ENCODE measurements at regions of chr4 and their contacts with region 1.

Region 1: DNA sequence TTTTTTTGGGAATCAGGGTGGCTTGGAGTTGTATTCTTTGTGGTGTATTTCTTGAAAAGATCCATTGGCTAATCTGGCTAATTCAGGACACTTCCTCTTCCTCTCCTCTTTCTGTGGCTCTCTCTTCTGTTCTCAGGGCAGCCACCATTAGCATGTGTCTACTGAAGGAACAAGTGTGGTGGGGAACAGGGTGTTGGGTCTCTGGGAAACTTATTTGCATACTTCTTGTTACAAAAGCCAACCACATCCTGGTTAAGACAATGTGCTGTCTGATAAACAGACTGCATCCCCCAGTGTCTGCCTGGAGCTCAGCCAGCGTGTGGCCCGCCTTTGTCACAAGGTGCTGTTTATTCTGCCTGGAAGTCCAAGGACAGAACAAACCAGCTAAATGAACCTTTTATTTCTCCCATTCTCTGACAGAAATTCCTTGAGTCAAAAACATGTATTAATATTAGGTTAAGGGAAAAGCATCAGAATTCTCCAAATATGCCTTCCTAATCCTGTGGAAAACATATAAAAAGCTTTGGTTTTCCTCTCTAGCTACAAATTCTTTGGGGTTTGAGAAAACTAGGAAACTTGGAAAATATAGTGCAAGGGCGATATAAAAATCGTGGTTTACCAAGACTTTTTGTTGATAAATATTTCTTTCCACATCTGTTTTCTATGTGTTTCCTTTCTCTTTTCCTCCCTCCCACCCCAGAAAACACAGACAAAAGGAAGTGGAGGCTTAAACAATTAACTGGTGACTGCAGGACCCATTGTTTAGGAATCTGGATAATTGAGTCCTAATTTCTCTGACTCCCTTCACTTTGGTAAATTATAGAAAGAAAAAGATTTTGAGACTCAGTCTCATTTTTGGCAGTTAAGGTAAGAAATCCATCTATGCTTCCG is 203.6 kb downstream of the SPRY1 start:
- DNase-seq: peak; percentile 27 to 65 (median 60)
- H3K4me3 ChIP-seq: no peak overlapping the region
- H3K4me3 Mint-ChIP-seq: peak overlapping the region; percentile 1 to 84 (median 30)
- H3K27ac ChIP-seq: no peak overlapping the region
- H3K27ac Mint-ChIP-seq: peak overlapping the region; percentile 67 to 94 (median 77)
- H3K4me1 ChIP-seq: peaks cover 21% of the 10 kb centered on the region
- H3K4me1 Mint-ChIP-seq: peaks cover 10 to 19% (median 16%) of the 10 kb centered on the region in 4 donors
- H3K27me3 ChIP-seq: no peaks in the 10 kb centered on the region
- H3K27me3 Mint-ChIP-seq: no peaks in the 10 kb centered on the region

Region 2: GRCh38 chr4:123517971-123518370 is 82.2 kb before region 1 on chr4:
- CTCF ChIA-PET with region 1: no interaction called
- POLR2A ChIA-PET with region 1: no interaction called
- intact Hi-C with region 1: no loop called
- DNase-seq: no peak
- H3K4me3 ChIP-seq: no peak overlapping the region
- H3K4me3 Mint-ChIP-seq: no peak overlapping the region
- H3K27ac ChIP-seq: no peak overlapping the region
- H3K27ac Mint-ChIP-seq: no peak overlapping the region
- H3K4me1 ChIP-seq: no peaks in the 10 kb centered on the region
- H3K4me1 Mint-ChIP-seq: no peaks in the 10 kb centered on the region
- H3K27me3 ChIP-seq: no peaks in the 10 kb centered on the region
- H3K27me3 Mint-ChIP-seq: peaks cover 2 to 7% of the 10 kb centered on the region in 2 donors

Region 3: GRCh38 chr4:123616951-123617461 is 16.8 kb after region 1 on chr4:
- CTCF ChIA-PET with region 1: no interaction called
- POLR2A ChIA-PET with region 1: interaction called, 4 read pairs
- intact Hi-C with region 1: loop called (anchors 1 kb)
- DNase-seq: peak; percentile 64 to 80 (median 80)
- H3K4me3 ChIP-seq: no peak overlapping the region
- H3K4me3 Mint-ChIP-seq: peak overlapping the region; percentile 5 to 72 (median 36)
- H3K27ac ChIP-seq: peak overlapping the region; percentile 31
- H3K27ac Mint-ChIP-seq: peak overlapping the region; percentile 83 to 99 (median 94)
- H3K4me1 ChIP-seq: peaks cover 20% of the 10 kb centered on the region
- H3K4me1 Mint-ChIP-seq: peaks cover 12 to 16% (median 14%) of the 10 kb centered on the region in 4 donors
- H3K27me3 ChIP-seq: no peaks in the 10 kb centered on the region
- H3K27me3 Mint-ChIP-seq: no peaks in the 10 kb centered on the region

Region 4: DNA sequence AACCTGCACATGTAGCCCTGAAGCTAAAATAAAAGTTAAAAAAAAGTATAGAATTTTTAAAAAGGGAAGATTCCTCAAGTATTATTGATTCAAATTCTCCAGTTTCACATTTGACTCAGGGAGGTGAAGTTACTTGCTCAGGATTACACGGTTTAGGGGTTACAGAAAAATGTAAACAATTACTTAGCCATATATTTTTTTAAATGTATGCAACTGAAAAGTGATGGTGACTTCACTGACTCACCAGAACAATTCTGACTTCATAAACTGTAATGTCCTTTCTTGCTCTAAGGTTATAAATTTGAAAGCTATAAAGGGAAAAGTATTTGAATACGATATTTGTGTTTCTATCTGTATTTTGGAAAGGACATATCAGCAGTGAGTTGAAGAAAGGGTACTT is 167.6 kb after region 1 on chr4:
- CTCF ChIA-PET with region 1: no interaction called
- POLR2A ChIA-PET with region 1: no interaction called
- intact Hi-C with region 1: no loop called
- DNase-seq: no peak
- H3K4me3 ChIP-seq: no peak overlapping the region
- H3K4me3 Mint-ChIP-seq: no peak overlapping the region
- H3K27ac ChIP-seq: no peak overlapping the region
- H3K27ac Mint-ChIP-seq: no peak overlapping the region
- H3K4me1 ChIP-seq: no peaks in the 10 kb centered on the region
- H3K4me1 Mint-ChIP-seq: no peaks in the 10 kb centered on the region
- H3K27me3 ChIP-seq: no peaks in the 10 kb centered on the region
- H3K27me3 Mint-ChIP-seq: peaks cover 0 to 3% of the 10 kb centered on the region in 2 donors